A673 (cell line): ENCODE measurements at regions of chr6 and their contacts with region 1.

Region 1: GRCh38 chr6:1686117-1687098 is 76.7 kb downstream of the FOXC1 start:
- DNase-seq: peak; percentile 91
- H3K4me3 ChIP-seq: no peak overlapping the region
- H3K27ac ChIP-seq: peak overlapping the region; percentile 52
- H3K4me1 ChIP-seq: peaks cover 27% of the 10 kb centered on the region
- H3K27me3 ChIP-seq: no peaks in the 10 kb centered on the region
- CTCF ChIP-seq: peak; percentile 68

Region 2: DNA sequence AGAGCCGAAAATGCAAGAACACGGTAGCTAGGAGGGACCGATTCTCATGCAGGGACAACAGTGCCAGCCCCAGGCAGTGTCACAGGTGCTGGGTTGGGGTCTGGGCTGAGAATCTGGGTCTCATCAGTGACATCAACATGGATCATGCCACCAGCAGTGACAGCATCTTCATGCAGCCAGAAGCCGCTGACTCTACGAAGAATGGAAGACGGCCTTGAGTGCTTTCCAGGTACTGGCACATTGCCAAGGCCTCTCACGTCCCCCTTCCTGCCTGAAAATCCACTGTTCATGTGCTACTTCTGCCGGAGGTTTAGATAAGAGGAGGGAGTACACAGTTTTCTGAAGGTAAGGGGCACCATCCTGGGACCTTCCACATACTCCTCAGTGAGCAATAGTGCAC is 515.6 kb before region 1 on chr6:
- CTCF ChIA-PET with region 1: no interaction called
- POLR2A ChIA-PET with region 1: no interaction called
- intact Hi-C with region 1: no loop called
- DNase-seq: no peak
- H3K4me3 ChIP-seq: no peak overlapping the region
- H3K27ac ChIP-seq: no peak overlapping the region
- H3K4me1 ChIP-seq: no peaks in the 10 kb centered on the region
- H3K27me3 ChIP-seq: peaks cover 7% of the 10 kb centered on the region
- CTCF ChIP-seq: no peak

Region 3: DNA sequence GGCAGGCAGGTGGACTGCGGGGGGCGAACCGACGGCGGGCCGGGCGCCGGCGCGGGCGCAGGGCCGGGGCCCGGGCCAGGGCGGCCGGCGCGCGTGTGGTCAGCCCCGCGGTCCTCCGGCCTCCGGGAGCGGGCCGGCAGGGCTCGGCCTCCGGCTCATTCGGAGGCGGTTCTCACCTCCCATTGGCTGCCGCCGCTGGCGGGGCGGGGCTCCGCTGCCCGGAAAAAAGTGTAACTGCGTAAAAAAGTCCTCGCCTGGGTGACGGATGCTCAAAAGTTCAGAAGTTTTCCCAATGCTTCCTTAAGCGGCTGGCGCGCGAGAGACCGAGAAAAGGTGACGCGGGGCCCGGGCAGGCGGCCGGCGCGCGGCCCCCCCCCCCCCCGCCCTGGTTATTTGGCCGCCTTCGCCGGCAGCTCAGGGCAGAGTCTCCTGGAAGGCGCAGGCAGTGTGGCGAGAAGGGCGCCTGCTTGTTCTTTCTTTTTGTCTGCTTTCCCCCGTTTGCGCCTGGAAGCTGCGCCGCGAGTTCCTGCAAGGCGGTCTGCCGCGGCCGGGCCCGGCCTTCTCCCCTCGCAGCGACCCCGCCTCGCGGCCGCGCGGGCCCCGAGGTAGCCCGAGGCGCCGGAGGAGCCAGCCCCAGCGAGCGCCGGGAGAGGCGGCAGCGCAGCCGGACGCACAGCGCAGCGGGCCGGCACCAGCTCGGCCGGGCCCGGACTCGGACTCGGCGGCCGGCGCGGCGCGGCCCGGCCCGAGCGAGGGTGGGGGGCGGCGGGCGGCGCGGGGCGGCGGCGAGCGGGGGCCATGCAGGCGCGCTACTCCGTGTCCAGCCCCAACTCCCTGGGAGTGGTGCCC is 76.5 kb before region 1 on chr6 and contains the start of gene FOXC1:
- CTCF ChIA-PET with region 1: interaction called, 6 read pairs
- POLR2A ChIA-PET with region 1: no interaction called
- intact Hi-C with region 1: loop called (anchors 5 kb)
- DNase-seq: peak; percentile 73
- H3K4me3 ChIP-seq: peak within 1 kb of the TSS; percentile 52
- H3K27ac ChIP-seq: no peak within 1 kb of the TSS
- H3K4me1 ChIP-seq: peaks cover 27% of the 10 kb centered on the region
- H3K27me3 ChIP-seq: peaks cover 86% of the 10 kb centered on the region
- CTCF ChIP-seq: no peak
- total RNA-seq, gene FOXC1: 0.49 and 0.50 TPM in 2 replicates